ENCODE measurements at regions of chr17 and their contacts with region 1.

Region 1: DNA sequence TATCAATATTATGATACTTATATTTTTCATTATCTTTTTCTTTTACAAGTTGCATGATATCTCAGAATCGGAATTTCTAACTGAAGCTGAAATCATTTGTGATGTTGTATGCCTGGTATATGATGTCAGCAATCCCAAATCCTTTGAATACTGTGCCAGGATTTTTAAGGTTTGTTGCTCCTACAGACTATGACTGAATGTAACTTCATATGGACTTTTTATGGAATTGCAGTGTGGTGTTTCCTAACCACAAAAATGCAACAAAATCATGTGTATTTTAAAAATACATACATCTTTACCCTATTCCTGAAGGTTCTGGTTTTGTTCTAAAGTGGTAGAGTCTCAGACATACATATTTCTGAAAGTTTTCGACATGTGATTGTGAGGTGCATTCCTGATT is 58.8 kb upstream of the RHBDL3 start:
- DNase-seq: no peak
- ATAC-seq: no peak
- H3K4me3 ChIP-seq: no peak overlapping the region
- H3K27ac ChIP-seq: no peak overlapping the region
- H3K4me1 ChIP-seq: peaks cover 8% of the 10 kb centered on the region
- H3K27me3 ChIP-seq: no peaks in the 10 kb centered on the region
- CTCF ChIP-seq: no peak
- EP300 ChIP-seq: no peak
- POLR2A ChIP-seq: no peak
- RAD21 ChIP-seq: no peak

Region 2: DNA sequence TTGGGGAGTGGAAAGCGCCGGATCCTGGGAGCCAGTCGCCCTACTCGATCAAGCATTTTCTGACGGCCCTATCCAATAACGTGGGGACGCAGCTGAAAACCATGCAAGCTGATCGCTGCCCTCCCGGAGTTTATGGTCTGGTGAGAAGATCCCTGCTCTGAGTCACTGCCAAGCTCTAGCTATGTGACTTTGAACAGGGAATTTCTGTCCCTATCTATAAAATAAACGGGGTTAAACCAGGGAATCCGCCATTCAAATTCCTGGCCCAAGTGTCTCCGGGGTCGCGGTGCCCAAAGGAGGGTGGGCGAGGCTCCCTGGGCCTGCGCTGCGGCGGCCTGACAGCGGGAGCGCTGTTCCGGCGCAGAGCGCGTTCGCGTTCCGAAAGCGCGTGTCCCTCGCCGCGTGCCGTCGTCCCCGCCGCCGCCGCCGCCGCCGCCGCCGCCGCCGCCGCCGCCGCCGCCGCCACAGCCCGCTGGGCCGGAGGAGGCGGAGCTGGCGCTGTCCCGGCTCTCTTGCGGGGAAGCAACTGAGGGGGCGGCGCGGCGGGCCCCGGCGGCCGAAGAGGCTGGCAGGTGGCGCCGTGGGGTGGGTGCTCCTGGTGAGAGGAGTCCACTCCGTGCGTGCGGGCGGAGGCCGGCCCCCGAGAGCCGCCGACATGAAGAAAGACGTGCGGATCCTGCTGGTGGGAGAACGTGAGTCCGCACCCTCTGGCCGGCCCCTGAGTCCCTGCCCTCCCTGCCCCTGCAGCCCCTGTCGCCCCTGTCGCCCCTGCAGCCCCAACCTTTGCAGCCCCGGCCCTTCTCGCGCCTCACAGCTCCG is 64.6 kb before region 1 on chr17 and contains the start of gene RHOT1:
- CTCF ChIA-PET with region 1: no interaction called
- POLR2A ChIA-PET with region 1: no interaction called
- in situ Hi-C with region 1: no loop called
- intact Hi-C with region 1: loop called (anchors 10 kb)
- DNase-seq: peak; percentile 73
- ATAC-seq: peak; percentile 85
- H3K4me3 ChIP-seq: peak within 1 kb of the TSS; percentile 86 to 100 (median 95)
- H3K27ac ChIP-seq: peak within 1 kb of the TSS; percentile 79
- H3K4me1 ChIP-seq: peaks cover 44% of the 10 kb centered on the region
- H3K27me3 ChIP-seq: no peaks in the 10 kb centered on the region; a peak in 2 of 5 replicates
- CTCF ChIP-seq: peak; percentile 76
- EP300 ChIP-seq: no peak
- POLR2A ChIP-seq: peak; percentile 46 to 54; a peak in 3 of 4 replicates
- RAD21 ChIP-seq: no peak
- total RNA-seq, gene RHOT1: 25.6 and 29.5 TPM in 2 replicates